ENCODE measurements at regions of chr2 and their contacts with region 1.

Region 1: GRCh38 chr2:74498500-74499266 is 720 bp downstream of the LBX2 start:
- DNase-seq: peak; percentile 49
- ATAC-seq: peak; percentile 63
- H3K4me3 Mint-ChIP-seq: peak overlapping the region; percentile 77
- H3K27ac Mint-ChIP-seq: peak overlapping the region; percentile 15
- H3K4me1 Mint-ChIP-seq: peaks cover 31% of the 10 kb centered on the region
- H3K27me3 Mint-ChIP-seq: peaks cover 50% of the 10 kb centered on the region

Region 2: DNA sequence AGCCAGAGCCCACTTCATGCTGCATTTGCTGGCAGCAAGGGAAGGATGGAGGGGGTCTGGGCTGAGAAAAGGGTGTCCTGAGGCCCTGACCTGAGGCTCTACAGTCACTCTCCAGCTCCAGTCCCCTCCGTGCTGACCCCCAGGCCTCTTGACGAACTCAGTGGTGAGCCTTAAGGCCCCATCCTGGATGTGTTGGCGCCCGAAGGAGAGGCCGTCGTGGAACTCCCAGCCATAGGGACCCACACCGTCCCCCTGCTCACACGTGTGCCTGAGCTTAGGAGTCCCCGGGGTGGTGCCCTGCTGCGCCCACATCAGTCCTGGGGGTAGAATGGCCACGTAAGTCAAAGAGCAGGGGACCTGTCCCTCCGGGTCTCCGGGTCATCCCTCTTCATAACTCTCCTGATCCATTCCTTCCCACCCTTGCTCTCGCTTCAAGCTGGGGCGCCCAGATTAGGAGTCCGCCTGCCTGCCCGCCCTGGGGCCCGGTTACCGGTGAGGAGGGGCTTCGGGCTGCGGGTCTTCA is 34.2 kb before region 1 on chr2:
- CTCF ChIA-PET with region 1: no interaction called
- POLR2A ChIA-PET with region 1: no interaction called
- intact Hi-C with region 1: no loop called
- DNase-seq: no peak
- ATAC-seq: peak; percentile 1
- H3K4me3 Mint-ChIP-seq: peak overlapping the region; percentile 93
- H3K27ac Mint-ChIP-seq: peak overlapping the region; percentile 60
- H3K4me1 Mint-ChIP-seq: peaks cover 19% of the 10 kb centered on the region
- H3K27me3 Mint-ChIP-seq: no peaks in the 10 kb centered on the region

Region 3: DNA sequence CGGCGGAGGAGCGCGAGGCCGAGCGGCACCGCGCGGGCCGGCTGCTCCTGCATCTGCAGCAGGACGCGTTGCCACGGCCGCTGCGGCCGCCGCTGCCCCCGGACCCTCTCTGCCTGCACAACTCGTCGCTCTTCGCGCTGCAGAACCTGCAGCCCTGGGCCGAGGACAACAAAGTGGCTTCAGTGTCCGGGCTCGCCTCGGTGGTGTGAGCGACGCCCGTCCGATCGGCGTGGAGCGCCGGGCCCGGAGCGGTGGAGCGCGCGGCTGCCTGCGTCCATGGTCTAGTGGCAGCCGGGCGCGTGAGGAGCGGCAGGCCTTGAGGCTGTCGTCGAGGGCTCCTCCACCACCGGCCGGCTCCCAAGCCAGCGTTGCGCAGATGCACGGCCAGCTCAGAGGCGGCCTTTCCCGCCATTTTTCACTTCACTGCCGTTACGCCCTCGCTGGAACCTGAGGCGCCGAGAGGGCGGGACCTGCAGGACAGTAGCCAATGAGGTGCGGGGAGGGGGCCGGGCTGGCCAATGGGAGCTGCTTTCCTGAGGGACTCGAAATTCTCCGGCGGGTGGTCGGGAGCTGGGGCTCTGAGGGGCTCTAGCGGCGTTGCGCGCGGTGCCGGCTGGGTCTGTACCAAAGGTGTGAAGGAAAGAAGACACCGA is 17.4 kb after region 1 on chr2:
- CTCF ChIA-PET with region 1: interaction called, 3 read pairs
- POLR2A ChIA-PET with region 1: no interaction called
- intact Hi-C with region 1: loop called in 1 of 2 experiments (anchors 1 kb)
- DNase-seq: peak; percentile 84
- ATAC-seq: peak; percentile 85
- H3K4me3 Mint-ChIP-seq: peak overlapping the region; percentile 46
- H3K27ac Mint-ChIP-seq: no peak overlapping the region
- H3K4me1 Mint-ChIP-seq: peaks cover 14% of the 10 kb centered on the region
- H3K27me3 Mint-ChIP-seq: peaks cover 70% of the 10 kb centered on the region